ENCODE measurements at regions of chr4 and their contacts with region 1.

Region 1: DNA sequence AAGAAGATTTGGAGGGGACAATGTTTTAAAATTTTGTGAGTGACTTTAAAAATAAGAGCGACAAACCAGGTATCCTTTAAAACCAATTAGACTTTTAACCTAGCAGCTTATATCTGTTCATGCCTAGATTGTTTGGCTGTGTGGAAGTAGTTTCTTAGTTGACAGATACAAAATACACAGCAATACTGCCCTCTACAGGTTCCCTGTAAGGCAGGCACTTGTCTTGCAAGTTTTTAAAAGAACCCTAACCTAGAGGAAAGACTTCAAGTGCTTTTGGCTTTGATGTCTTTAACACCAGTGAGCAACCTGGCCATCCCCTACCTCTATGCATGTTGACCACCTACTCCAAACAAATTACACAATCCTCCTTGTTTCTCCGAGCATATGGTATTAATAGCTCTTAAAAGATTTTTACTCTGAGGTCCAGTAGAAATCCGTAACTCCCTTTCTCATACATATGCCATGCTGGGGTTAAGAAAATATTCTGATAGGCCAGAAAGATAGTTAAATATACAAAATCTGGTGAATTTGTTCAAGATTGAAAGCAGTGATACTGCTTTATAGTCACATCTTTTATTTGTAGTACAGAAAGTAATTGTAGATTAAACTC is 273.0 kb downstream of the ARHGAP24 start:
- DNase-seq: no peak
- ATAC-seq: peak; percentile 83
- H3K4me3 ChIP-seq: no peak overlapping the region
- H3K27ac ChIP-seq: peak overlapping the region; percentile 77
- H3K4me1 ChIP-seq: peaks cover 45% of the 10 kb centered on the region
- H3K27me3 ChIP-seq: no peaks in the 10 kb centered on the region
- CTCF ChIP-seq: peak; percentile 72; the same call in 1 of the 2 replicates

Region 2: DNA sequence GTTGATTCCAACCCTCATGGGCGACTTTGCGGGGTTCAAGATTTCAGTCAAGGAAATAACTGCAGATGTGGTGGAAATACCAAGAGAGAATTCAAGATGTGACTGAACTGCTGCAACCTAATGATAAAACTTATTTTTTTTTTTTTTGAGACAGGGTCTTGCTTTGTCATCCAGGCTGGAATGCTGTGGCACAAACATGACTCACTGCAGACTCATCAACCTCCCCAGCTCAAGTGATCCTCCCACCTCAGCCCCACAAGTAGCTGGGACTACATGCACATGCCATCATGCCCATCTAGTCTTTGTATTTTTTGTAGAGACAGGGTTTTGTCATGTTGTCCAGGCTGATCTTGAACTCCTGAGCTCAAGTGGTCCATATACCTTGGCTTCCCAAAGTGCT is 762.0 kb before region 1 on chr4:
- CTCF ChIA-PET with region 1: no interaction called
- POLR2A ChIA-PET with region 1: no interaction called
- in situ Hi-C with region 1: no loop called
- intact Hi-C with region 1: loop called (anchors 5 kb)
- DNase-seq: no peak
- ATAC-seq: no peak
- H3K4me3 ChIP-seq: no peak overlapping the region
- H3K27ac ChIP-seq: no peak overlapping the region
- H3K4me1 ChIP-seq: no peaks in the 10 kb centered on the region
- H3K27me3 ChIP-seq: no peaks in the 10 kb centered on the region
- CTCF ChIP-seq: no peak

Region 3: GRCh38 chr4:85084380-85085094 is 663.5 kb before region 1 on chr4:
- CTCF ChIA-PET with region 1: interaction called, 3 read pairs
- POLR2A ChIA-PET with region 1: no interaction called
- in situ Hi-C with region 1: no loop called
- intact Hi-C with region 1: loop called (anchors 10 kb)
- DNase-seq: peak; percentile 38
- ATAC-seq: peak; percentile 80
- H3K4me3 ChIP-seq: no peak overlapping the region
- H3K27ac ChIP-seq: 0 out of 2 replicates have a peak overlapping the region, but pooled peaks have one; percentile 29
- H3K4me1 ChIP-seq: no peaks in the 10 kb centered on the region
- H3K27me3 ChIP-seq: no peaks in the 10 kb centered on the region
- CTCF ChIP-seq: peak; percentile 69; the same call in 1 of the 2 replicates

Region 4: GRCh38 chr4:85147439-85148076 is 600.4 kb before region 1 on chr4:
- CTCF ChIA-PET with region 1: no interaction called
- POLR2A ChIA-PET with region 1: no interaction called
- in situ Hi-C with region 1: no loop called
- intact Hi-C with region 1: loop called (anchors 5 kb)
- DNase-seq: peak; percentile 39
- ATAC-seq: peak; percentile 92
- H3K4me3 ChIP-seq: no peak overlapping the region
- H3K27ac ChIP-seq: peak overlapping the region; percentile 69; the same call in 1 of the 2 replicates
- H3K4me1 ChIP-seq: peaks cover 3% of the 10 kb centered on the region; the same call in 1 of the 2 replicates
- H3K27me3 ChIP-seq: no peaks in the 10 kb centered on the region
- CTCF ChIP-seq: peak; percentile 58; the same call in 1 of the 2 replicates

Region 5: DNA sequence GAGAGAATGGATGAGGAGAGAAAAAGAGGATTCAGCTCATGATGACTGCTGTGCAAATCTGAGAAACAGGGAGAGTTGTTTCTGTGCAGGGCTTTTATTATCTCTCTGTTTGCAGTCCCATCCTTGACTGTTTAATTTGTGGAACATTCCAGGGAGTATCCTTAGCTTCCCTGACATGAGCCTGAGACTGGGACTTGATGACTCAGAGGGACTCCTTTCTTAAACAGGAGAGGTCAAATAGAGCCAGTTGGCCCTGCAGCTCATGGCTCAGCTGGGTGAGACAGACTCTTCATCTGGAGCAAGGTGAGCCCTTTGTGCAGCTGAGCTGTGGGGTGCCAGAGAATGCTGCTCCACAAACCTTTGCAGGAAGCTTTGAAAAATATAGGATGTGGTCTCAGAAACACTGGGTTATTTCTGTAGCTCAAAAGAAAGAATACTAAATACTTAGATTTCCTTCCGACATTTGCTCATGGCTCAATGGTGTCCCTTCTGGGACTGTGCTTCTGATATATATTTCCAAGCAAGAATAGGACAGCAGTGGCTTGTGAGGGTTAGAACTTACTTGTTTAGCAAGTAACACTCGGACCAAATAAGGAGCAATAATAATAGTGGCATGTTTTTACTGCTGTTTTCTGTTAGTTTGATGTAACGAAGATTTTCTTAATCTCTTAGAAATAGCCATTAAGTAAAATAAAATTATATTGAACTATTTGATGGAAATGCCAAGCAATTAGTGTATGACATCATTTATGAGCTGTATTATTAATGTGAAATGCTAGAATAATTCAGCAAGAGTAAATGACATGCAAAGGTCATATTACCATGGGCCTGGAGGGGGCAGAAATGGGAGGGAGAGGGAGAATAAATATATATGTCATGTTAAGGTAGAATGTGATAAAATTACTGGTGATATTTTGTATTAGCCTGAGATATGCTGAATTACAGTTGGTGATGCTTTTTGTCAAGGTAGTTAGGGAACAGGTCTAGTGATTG is 258.4 kb before region 1 on chr4:
- CTCF ChIA-PET with region 1: interaction called, 4 read pairs
- POLR2A ChIA-PET with region 1: no interaction called
- in situ Hi-C with region 1: no loop called
- intact Hi-C with region 1: loop called (anchors 5 kb)
- DNase-seq: no peak
- ATAC-seq: peak; percentile 90
- H3K4me3 ChIP-seq: peak overlapping the region; percentile 4 to 15; a peak in 3 of 4 replicates
- H3K27ac ChIP-seq: peak overlapping the region; percentile 99
- H3K4me1 ChIP-seq: peaks cover 58% of the 10 kb centered on the region
- H3K27me3 ChIP-seq: no peaks in the 10 kb centered on the region
- CTCF ChIP-seq: peak; percentile 23; the same call in 1 of the 2 replicates

Region 6: DNA sequence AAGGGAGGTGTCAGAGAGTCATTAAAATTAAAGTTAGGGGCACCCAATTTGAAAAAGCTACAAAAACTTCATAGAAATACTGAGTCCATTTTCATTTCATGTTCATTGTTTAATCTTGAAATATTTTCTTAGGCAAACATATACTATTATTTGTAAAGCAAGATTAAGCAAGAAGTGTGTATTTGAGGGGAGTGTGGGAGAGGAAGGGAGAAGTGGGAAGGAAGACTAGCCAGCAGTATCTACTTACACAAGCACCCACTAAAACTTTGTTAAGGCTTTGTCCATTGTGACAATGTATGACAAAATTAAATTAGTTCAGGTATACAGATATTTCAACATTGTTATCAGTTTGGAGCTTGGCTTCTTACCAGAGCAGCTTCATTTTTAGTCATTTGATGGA is 50.1 kb before region 1 on chr4:
- CTCF ChIA-PET with region 1: no interaction called
- POLR2A ChIA-PET with region 1: no interaction called
- in situ Hi-C with region 1: no loop called
- intact Hi-C with region 1: no loop called
- DNase-seq: no peak
- ATAC-seq: no peak
- H3K4me3 ChIP-seq: no peak overlapping the region
- H3K27ac ChIP-seq: no peak overlapping the region
- H3K4me1 ChIP-seq: no peaks in the 10 kb centered on the region
- H3K27me3 ChIP-seq: no peaks in the 10 kb centered on the region
- CTCF ChIP-seq: no peak

Region 7: DNA sequence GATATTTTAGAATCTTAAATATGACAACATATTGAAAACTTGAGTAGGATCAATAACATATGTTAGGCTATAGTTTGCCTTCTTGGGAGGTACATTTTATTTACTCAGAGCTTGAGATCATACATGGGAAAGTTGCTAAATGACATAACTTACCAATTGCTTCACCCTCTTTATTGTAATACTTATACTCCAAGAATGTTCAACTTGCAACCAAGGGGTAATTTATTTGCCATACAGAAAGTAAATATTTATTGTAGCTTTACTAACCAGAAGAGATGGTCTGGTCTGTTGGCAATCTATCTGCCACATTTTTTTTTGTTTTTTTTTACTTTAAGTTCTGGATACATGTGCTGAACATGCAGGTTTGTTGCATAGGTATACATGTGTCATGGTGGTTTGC is 153.5 kb after region 1 on chr4:
- CTCF ChIA-PET with region 1: no interaction called
- POLR2A ChIA-PET with region 1: no interaction called
- in situ Hi-C with region 1: no loop called
- intact Hi-C with region 1: no loop called
- DNase-seq: peak; percentile 15
- ATAC-seq: no peak
- H3K4me3 ChIP-seq: no peak overlapping the region
- H3K27ac ChIP-seq: no peak overlapping the region
- H3K4me1 ChIP-seq: no peaks in the 10 kb centered on the region
- H3K27me3 ChIP-seq: no peaks in the 10 kb centered on the region
- CTCF ChIP-seq: no peak

Region 8: DNA sequence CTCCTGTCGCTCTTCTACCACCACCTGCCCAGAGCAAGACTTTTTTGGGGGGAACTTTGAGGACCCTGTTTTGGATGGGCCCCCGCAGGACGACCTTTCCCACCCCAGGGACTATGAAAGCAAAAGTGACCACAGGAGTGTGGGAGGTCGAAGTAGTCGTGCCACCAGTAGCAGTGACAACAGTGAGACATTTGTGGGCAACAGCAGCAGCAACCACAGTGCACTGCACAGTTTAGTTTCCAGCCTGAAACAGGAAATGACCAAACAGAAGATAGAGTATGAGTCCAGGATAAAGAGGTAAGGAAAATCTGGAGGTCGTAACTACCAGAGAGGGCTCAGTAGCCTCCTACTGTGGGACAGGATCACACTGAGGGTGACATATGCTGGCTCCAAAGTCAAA is 247.4 kb after region 1 on chr4:
- CTCF ChIA-PET with region 1: no interaction called
- POLR2A ChIA-PET with region 1: no interaction called
- in situ Hi-C with region 1: no loop called
- intact Hi-C with region 1: no loop called
- DNase-seq: no peak
- ATAC-seq: no peak
- H3K4me3 ChIP-seq: no peak overlapping the region
- H3K27ac ChIP-seq: no peak overlapping the region
- H3K4me1 ChIP-seq: no peaks in the 10 kb centered on the region
- H3K27me3 ChIP-seq: no peaks in the 10 kb centered on the region
- CTCF ChIP-seq: no peak

Measured in Panc1 (cell line).